Heart right ventricle (tissue), 16 donors: ENCODE measurements at regions of chr5 and their contacts with region 1.

Region 1: DNA sequence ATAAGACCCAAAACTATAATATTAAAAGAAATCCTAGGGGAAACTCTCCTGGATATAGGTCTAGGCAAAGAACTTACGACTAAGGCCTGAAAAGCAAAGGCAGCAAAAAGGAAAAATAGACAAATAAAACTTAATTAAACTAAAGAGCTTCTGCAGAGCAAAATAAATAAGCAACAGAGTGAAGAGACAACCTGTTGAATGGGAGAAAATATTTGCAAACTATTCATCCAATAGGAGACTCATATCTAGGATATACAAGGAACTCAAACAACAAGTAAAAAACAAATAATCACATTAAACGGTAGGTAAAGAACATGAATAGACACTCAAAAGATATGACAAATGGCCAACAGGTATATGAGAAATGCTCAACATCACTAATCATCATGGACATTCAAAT is 318.6 kb downstream of the CSNK1G3 start:
- DNase-seq: no peak
- ATAC-seq: no peak
- H3K4me3 ChIP-seq: no peak overlapping the region
- H3K27ac ChIP-seq: no peak overlapping the region
- H3K4me1 ChIP-seq: peaks cover 0 to 6% (median 0%) of the 10 kb centered on the region in 9 donors
- H3K27me3 ChIP-seq: no peaks in the 10 kb centered on the region
- CTCF ChIP-seq: no peak

Region 2: GRCh38 chr5:123802298-123802951 is 28.1 kb before region 1 on chr5:
- intact Hi-C with region 1: no loop called
- DNase-seq: no peak
- ATAC-seq: no peak
- H3K4me3 ChIP-seq: no peak overlapping the region
- H3K27ac ChIP-seq: no peak overlapping the region
- H3K4me1 ChIP-seq: peaks cover 0 to 10% (median 5%) of the 10 kb centered on the region in 9 donors
- H3K27me3 ChIP-seq: no peaks in the 10 kb centered on the region
- CTCF ChIP-seq: no peak

Region 3: GRCh38 chr5:123844873-123845272 is 14.3 kb after region 1 on chr5:
- intact Hi-C with region 1: loop called in 1 of 10 experiments (anchors 2 kb)
- DNase-seq: no peak
- ATAC-seq: peak in 5 of 8 donors; percentile 37 to 71 (median 44)
- H3K4me3 ChIP-seq: no peak overlapping the region
- H3K27ac ChIP-seq: peak overlapping the region in 3 of 10 donors; percentile 9 to 31 (median 11)
- H3K4me1 ChIP-seq: peaks cover 0 to 10% (median 0%) of the 10 kb centered on the region in 9 donors
- H3K27me3 ChIP-seq: no peaks in the 10 kb centered on the region
- CTCF ChIP-seq: no peak